HCT116 (cell line): ENCODE measurements at regions of chr12 and their contacts with region 1.

Region 1: GRCh38 chr12:64181504-64182291 is 40.4 kb downstream of the KICS2 start:
- DNase-seq: peak; percentile 92
- ATAC-seq: peak; percentile 94
- H3K4me3 ChIP-seq: peak overlapping the region in 1 of 2 experiments; percentile 36; a peak in 2 of 4 replicates
- H3K27ac ChIP-seq: peak overlapping the region; percentile 60; the same call in 1 of the 2 replicates
- H3K4me1 ChIP-seq: peaks cover 16 to 50% of the 10 kb centered on the region in 2 experiments
- H3K27me3 ChIP-seq: no peaks in the 10 kb centered on the region
- CTCF ChIP-seq: peak; percentile 59 to 70 (median 68); a peak in 5 of 6 replicates
- POLR2A ChIP-seq: no peak
- RAD21 ChIP-seq: peak; percentile 69

Region 2: DNA sequence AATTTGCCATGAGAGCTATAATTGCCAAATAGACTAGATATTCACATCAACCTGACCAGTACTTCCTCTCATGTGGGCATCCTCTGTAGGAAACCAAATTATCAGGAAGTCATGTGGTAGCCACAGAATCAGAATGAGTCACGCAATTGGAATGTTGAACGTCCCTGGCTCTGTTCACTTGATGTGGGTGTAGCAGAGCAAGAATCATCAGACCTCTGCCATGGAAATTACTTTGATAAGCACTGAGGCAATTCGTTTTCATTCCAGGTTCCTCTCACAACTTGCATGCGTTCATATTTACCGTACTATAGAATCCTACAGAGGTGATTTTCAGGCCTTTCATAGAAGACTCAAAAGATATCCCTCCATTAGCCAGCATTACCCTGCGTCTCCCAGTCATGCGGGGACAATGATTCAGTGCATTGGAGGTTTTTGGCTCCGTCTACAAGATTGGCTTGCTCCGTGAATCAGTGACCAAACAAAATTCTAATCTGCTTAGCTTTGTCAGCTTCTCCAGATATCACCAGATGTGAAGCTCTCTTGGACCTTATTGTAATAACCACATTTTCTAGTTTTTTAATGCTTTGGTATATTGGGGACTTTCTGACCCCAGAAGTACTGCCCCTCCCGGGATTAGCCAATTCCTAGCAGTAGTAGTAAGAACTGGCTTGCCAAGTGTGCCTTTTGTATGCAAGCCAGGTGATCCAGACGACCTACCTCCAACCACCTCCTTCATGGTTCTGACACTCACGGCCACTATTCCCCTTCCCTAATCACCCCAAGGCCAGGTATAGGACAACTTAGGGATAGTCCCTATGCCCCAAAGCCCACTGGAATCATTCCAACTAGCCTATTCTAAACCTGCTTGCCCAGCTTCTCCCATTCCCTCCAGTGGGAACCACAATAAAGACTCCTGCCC is 93.0 kb before region 1 on chr12:
- CTCF ChIA-PET with region 1: no interaction called
- POLR2A ChIA-PET with region 1: no interaction called
- RAD21 ChIA-PET with region 1: no interaction called
- intact Hi-C with region 1: loop called (anchors 2 kb)
- DNase-seq: peak; percentile 91
- ATAC-seq: peak; percentile 92
- H3K4me3 ChIP-seq: peak overlapping the region; percentile 0 to 55
- H3K27ac ChIP-seq: peak overlapping the region; percentile 93
- H3K4me1 ChIP-seq: peaks cover 48 to 50% of the 10 kb centered on the region in 2 experiments
- H3K27me3 ChIP-seq: no peaks in the 10 kb centered on the region
- CTCF ChIP-seq: no peak
- POLR2A ChIP-seq: no peak
- RAD21 ChIP-seq: peak; percentile 19; the same call in 1 of the 2 replicates